GM10248 (cell line): ENCODE measurements at regions of chr7 and their contacts with region 1.

Region 1: DNA sequence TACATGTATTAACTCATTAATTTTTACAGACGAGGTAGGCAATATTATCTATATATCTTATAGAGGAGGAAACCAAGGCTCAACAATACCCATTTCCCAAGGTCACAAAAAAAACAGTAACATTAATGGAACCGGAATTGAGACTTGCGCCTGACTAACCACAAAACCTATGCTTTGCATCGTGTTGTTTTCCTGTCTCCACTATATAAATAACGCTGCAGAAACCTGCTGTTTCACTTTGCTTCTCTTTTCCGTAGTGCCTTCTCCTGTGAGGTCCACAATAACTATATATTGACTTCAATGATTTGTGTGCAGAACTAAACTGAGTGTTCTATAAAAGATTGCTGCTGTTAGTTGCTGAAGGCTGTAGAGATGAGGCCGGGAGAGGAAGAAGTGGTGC is 97.7 kb upstream of the RPA3 start:
- DNase-seq: peak; percentile 28
- CTCF ChIP-seq: no peak

Region 2: DNA sequence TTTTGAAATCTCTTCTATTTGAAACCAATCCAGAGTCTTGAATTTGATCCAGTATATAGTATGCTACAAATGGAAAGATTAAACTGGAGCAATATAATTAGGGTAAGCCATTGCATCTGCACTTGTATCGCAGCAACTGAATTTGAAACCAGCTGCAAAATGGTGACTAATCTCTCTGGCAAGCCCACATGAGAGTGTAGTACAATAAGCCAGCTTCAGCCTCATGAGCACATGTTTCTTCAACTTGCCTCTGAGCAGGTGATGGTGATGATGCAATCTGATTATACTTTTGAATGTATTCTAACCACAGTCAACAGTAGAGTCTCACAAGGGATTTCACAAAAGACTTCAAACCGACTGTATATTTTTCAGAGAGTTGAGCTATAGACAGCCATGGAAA is 96.8 kb before region 1 on chr7:
- CTCF ChIA-PET with region 1: no interaction called
- POLR2A ChIA-PET with region 1: interaction called, 11 read pairs
- DNase-seq: peak; percentile 68
- CTCF ChIP-seq: no peak